IMR-90 (cell line): ENCODE measurements at regions of chr11 and their contacts with region 1.

Region 1: GRCh38 chr11:121930004-121930965 is 185.7 kb downstream of the BLID start:
- DNase-seq: peak; percentile 13
- ATAC-seq: no peak
- H3K4me3 ChIP-seq: no peak overlapping the region
- H3K27ac ChIP-seq: peak overlapping the region; percentile 10; the same call in 1 of the 2 replicates
- H3K4me1 ChIP-seq: peaks cover 14% of the 10 kb centered on the region
- H3K27me3 ChIP-seq: no peaks in the 10 kb centered on the region
- CTCF ChIP-seq: no peak
- POLR2A ChIP-seq: no peak
- RAD21 ChIP-seq: no peak

Region 2: DNA sequence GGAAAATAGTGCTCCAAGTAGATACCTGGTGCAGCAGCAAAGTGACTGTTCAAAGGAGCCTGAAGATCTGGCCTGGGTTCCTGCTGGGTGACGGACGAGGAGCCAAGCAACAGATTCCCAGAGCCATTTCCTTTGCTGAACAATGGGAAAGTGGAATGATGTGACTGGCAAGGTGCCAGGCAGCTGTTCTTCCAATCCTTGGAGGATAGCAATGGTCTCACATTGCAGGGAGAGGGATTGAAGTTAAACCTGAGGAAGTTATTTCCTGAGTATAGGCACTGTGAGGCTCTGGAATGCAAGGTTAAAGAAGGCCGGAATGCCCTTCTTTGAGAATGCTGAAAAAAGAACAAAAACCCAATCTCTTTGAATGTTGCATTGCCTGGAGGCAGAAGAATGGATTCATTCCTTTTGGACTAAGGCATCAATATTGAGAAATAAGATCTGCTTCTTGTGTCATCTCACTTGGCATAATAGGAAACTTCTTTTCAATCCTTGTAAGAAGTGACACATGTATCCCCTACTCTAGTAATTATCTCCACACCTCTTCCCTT is 38.1 kb before region 1 on chr11:
- CTCF ChIA-PET with region 1: interaction called, 7 read pairs
- POLR2A ChIA-PET with region 1: no interaction called
- dilution Hi-C with region 1: no loop called
- in situ Hi-C with region 1: no loop called
- intact Hi-C with region 1: loop called (anchors 5 kb)
- DNase-seq: peak; percentile 56
- ATAC-seq: no peak; the same call in 1 of the 2 replicates
- H3K4me3 ChIP-seq: no peak overlapping the region
- H3K27ac ChIP-seq: no peak overlapping the region
- H3K4me1 ChIP-seq: peaks cover 22% of the 10 kb centered on the region; the same call in 1 of the 2 replicates
- H3K27me3 ChIP-seq: no peaks in the 10 kb centered on the region
- CTCF ChIP-seq: no peak
- POLR2A ChIP-seq: no peak
- RAD21 ChIP-seq: no peak